ENCODE measurements at regions of chr14 and their contacts with region 1.

Region 1: DNA sequence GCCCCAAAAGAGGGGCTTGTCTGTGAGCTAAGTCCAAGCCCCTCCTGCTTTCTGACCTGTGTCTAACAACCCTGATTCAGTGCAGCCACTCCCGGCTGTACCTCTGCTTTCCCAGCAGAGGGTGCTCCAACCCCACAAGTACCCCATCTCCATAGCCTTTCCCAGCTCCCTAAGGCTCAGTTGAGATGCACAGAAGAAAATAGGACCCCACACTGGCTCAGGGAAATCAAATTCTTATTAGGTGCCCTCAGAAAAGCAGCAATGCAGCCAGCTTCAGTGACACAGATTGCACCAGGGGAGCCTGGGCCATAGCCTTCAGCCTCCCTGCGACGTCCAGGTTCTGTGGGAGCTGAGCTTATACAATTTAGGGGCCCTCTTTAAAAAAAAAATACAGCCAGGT is 49.9 kb downstream of the LRRC74A start:
- DNase-seq: no peak
- ATAC-seq: peak; percentile 92
- H3K4me3 ChIP-seq: no peak overlapping the region
- H3K27ac ChIP-seq: no peak overlapping the region
- H3K4me1 ChIP-seq: no peaks in the 10 kb centered on the region
- H3K27me3 ChIP-seq: no peaks in the 10 kb centered on the region; a peak in 1 of 4 replicates
- CTCF ChIP-seq: peak; percentile 90 to 94 (median 92)
- EP300 ChIP-seq: no peak
- POLR2A ChIP-seq: no peak
- RAD21 ChIP-seq: peak; percentile 97

Region 2: GRCh38 chr14:76827696-76828296 is 48.3 kb before region 1 on chr14:
- CTCF ChIA-PET with region 1: no interaction called
- POLR2A ChIA-PET with region 1: no interaction called
- RAD21 ChIA-PET with region 1: no interaction called
- SMC1A ChIA-PET with region 1: no interaction called
- in situ Hi-C with region 1: no loop called
- intact Hi-C with region 1: no loop called
- DNase-seq: no peak
- ATAC-seq: no peak
- H3K4me3 ChIP-seq: no peak overlapping the region
- H3K27ac ChIP-seq: no peak overlapping the region
- H3K4me1 ChIP-seq: no peaks in the 10 kb centered on the region
- H3K27me3 ChIP-seq: peaks cover 0 to 1% of the 10 kb centered on the region in 2 experiments; a peak in 1 of 4 replicates
- CTCF ChIP-seq: no peak
- EP300 ChIP-seq: no peak
- POLR2A ChIP-seq: no peak
- RAD21 ChIP-seq: no peak

Region 3: GRCh38 chr14:76891391-76891790 is 15.3 kb after region 1 on chr14:
- CTCF ChIA-PET with region 1: interaction called, 13 read pairs
- POLR2A ChIA-PET with region 1: no interaction called
- RAD21 ChIA-PET with region 1: interaction called, 4 read pairs
- SMC1A ChIA-PET with region 1: interaction called, 7 read pairs
- in situ Hi-C with region 1: no loop called
- intact Hi-C with region 1: no loop called
- DNase-seq: no peak
- ATAC-seq: no peak
- H3K4me3 ChIP-seq: no peak overlapping the region
- H3K27ac ChIP-seq: no peak overlapping the region
- H3K4me1 ChIP-seq: no peaks in the 10 kb centered on the region
- H3K27me3 ChIP-seq: no peaks in the 10 kb centered on the region; a peak in 1 of 4 replicates
- CTCF ChIP-seq: no peak
- EP300 ChIP-seq: no peak
- POLR2A ChIP-seq: no peak
- RAD21 ChIP-seq: no peak

Region 4: GRCh38 chr14:76947078-76947837 is 71.2 kb after region 1 on chr14:
- CTCF ChIA-PET with region 1: interaction called, 13 read pairs
- POLR2A ChIA-PET with region 1: no interaction called
- RAD21 ChIA-PET with region 1: interaction called, 10 read pairs
- SMC1A ChIA-PET with region 1: interaction called, 9 read pairs
- in situ Hi-C with region 1: no loop called
- intact Hi-C with region 1: loop called (anchors 5 kb)
- DNase-seq: peak; percentile 67
- ATAC-seq: peak; percentile 87
- H3K4me3 ChIP-seq: no peak overlapping the region
- H3K27ac ChIP-seq: peak overlapping the region; percentile 64
- H3K4me1 ChIP-seq: peaks cover 29% of the 10 kb centered on the region
- H3K27me3 ChIP-seq: no peaks in the 10 kb centered on the region
- CTCF ChIP-seq: peak; percentile 45 to 72 (median 58)
- EP300 ChIP-seq: peak in 1 of 2 experiments; percentile 65; a peak in 2 of 4 replicates
- POLR2A ChIP-seq: no peak
- RAD21 ChIP-seq: peak; percentile 72

Region 5: DNA sequence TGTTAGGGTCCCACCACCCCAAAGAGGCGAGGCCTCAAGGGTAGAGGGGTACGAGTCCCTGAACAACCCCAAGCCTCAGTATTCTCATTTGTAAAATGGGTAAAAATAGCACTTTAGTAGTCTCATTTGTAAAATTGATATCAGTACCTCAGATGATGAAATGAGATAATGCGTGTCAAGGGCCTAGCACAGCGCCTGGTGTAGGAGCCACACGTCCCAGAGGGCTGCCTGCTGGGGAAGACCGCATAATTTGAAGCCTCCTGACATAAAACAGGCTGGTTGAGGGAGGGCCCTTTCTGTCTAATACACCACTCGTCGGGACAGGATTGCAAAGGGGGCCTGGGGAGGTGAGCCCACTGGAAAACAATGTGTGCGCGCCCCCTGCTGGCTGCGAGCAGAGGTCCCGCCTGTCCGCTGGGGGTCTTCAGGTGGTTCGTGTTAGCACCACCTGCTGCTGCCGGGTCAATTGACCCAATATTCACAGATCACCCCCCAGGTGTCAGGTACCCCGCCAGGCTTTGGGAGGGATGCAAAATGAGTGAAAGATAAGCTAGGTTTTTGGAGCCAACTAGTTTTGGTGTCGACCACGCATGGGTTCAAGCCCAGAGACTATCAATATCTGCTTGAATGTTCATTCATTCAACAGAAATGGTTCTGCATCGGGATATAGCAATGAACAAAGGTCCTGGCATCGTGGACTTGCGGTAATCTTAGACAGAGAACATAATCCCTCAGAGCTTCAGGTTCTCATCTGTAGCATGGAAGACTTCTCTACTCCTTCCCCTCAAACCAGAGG is 177.2 kb after region 1 on chr14:
- CTCF ChIA-PET with region 1: interaction called, 63 read pairs
- POLR2A ChIA-PET with region 1: no interaction called
- RAD21 ChIA-PET with region 1: interaction called, 31 read pairs
- SMC1A ChIA-PET with region 1: interaction called, 41 read pairs
- in situ Hi-C with region 1: no loop called
- intact Hi-C with region 1: loop called (anchors 1 kb)
- DNase-seq: no peak
- ATAC-seq: peak; percentile 98
- H3K4me3 ChIP-seq: no peak overlapping the region
- H3K27ac ChIP-seq: no peak overlapping the region
- H3K4me1 ChIP-seq: peaks cover 12% of the 10 kb centered on the region
- H3K27me3 ChIP-seq: no peaks in the 10 kb centered on the region
- CTCF ChIP-seq: peak; percentile 77 to 90 (median 85)
- EP300 ChIP-seq: no peak
- POLR2A ChIP-seq: no peak
- RAD21 ChIP-seq: peak; percentile 91

Region 6: DNA sequence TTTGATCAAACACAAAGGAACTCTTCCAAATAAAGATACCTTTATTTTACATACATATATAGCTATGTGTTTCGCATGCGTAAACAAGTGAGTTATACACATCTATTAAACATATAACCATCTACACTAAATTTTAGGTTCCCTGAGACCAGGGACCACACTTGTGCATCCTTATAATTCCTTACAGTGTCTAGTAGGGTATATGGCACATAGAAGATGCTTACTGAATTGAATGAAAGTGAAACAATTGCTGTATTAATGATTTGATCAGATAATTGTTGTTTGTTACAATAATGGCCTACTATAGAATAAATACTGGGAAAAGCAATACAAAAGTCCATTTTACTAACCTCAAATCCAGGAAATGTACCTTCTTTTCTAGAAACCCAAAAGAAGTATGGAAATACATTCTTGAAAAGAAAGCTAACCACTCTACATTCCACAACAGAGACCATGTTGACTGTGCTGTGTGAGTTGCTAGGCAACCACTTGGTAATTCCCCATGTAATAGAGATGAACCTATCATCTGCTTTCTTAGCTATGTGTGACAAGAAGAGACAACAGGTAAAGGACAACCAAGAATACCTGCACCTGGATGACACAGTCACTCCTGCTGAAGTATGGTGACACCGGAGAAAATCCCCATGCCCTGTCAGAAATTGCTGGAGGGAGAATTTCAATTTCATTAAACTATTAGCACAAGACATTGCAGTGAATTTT is 210.1 kb after region 1 on chr14:
- CTCF ChIA-PET with region 1: interaction called, 205 read pairs
- POLR2A ChIA-PET with region 1: no interaction called
- RAD21 ChIA-PET with region 1: interaction called, 11 read pairs
- SMC1A ChIA-PET with region 1: interaction called, 23 read pairs
- in situ Hi-C with region 1: no loop called
- intact Hi-C with region 1: no loop called
- DNase-seq: no peak
- ATAC-seq: peak; percentile 82
- H3K4me3 ChIP-seq: no peak overlapping the region
- H3K27ac ChIP-seq: no peak overlapping the region
- H3K4me1 ChIP-seq: peaks cover 21% of the 10 kb centered on the region
- H3K27me3 ChIP-seq: no peaks in the 10 kb centered on the region; a peak in 1 of 4 replicates
- CTCF ChIP-seq: no peak
- EP300 ChIP-seq: no peak
- POLR2A ChIP-seq: no peak
- RAD21 ChIP-seq: no peak

Region 7: DNA sequence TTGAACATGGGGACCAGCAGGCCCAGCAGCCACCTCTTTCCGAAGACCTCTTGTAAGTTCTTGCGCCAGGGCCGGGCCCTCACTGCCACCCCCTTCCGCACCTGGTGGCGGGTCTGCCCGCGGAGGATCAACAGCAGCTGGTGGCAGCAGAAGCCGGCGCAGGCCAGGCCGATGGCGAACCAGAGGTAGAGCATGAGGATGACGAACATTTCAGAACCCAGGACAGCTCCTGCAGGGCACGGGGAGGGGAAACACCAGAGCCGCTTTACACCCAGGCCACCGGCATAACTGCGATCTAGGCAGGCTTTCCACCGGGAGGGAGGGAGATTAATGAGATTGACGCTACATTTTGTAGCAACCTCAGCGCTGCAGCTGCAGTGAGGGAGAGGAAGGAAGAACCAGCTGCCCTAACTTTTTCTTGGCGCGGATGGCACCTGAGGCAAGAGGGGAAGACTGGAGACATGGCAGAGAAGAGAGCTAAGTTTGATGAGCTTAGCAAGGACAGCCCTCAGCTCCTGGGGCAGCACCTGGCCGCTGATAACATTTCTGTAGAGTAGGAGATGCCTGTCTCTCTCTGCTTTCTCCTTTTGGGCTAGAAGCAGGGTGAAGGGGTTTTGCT is 257.8 kb after region 1 on chr14:
- CTCF ChIA-PET with region 1: interaction called, 11 read pairs
- POLR2A ChIA-PET with region 1: no interaction called
- RAD21 ChIA-PET with region 1: interaction called, 6 read pairs
- SMC1A ChIA-PET with region 1: interaction called, 3 read pairs
- in situ Hi-C with region 1: no loop called
- intact Hi-C with region 1: no loop called
- DNase-seq: no peak
- ATAC-seq: peak; percentile 92
- H3K4me3 ChIP-seq: no peak overlapping the region
- H3K27ac ChIP-seq: no peak overlapping the region
- H3K4me1 ChIP-seq: no peaks in the 10 kb centered on the region
- H3K27me3 ChIP-seq: peaks cover 11 to 13% of the 10 kb centered on the region in 2 experiments
- CTCF ChIP-seq: no peak
- EP300 ChIP-seq: no peak
- POLR2A ChIP-seq: no peak
- RAD21 ChIP-seq: no peak

Region 8: GRCh38 chr14:77704740-77705139 is 828.7 kb after region 1 on chr14:
- CTCF ChIA-PET with region 1: no interaction called
- POLR2A ChIA-PET with region 1: no interaction called
- RAD21 ChIA-PET with region 1: no interaction called
- SMC1A ChIA-PET with region 1: no interaction called
- in situ Hi-C with region 1: no loop called
- intact Hi-C with region 1: no loop called
- DNase-seq: no peak
- ATAC-seq: no peak
- H3K4me3 ChIP-seq: no peak overlapping the region
- H3K27ac ChIP-seq: no peak overlapping the region
- H3K4me1 ChIP-seq: peaks cover 7% of the 10 kb centered on the region
- H3K27me3 ChIP-seq: no peaks in the 10 kb centered on the region
- CTCF ChIP-seq: no peak
- EP300 ChIP-seq: no peak
- POLR2A ChIP-seq: no peak
- RAD21 ChIP-seq: no peak

Region 9: DNA sequence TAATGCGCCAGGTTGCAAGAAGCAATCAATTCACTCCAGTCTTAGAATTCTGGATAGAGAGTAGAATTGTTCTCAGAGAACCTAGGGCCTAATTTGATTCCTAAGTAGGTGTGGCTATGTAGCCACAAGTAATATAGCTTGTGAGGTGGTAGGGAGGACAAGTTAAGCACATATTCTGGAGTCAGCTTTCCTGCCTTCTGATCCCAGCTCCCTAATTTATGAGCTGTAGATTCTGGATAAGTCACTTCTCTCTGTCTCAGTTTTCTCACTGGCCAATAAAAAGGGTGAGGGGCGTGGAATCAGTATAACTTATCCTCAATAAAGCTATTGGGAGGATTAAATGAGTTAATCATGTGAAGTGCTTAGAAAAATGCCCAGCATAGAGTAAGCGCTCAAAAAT is 887.9 kb after region 1 on chr14:
- CTCF ChIA-PET with region 1: no interaction called
- POLR2A ChIA-PET with region 1: no interaction called
- RAD21 ChIA-PET with region 1: no interaction called
- SMC1A ChIA-PET with region 1: no interaction called
- in situ Hi-C with region 1: no loop called
- intact Hi-C with region 1: no loop called
- DNase-seq: no peak
- ATAC-seq: no peak
- H3K4me3 ChIP-seq: no peak overlapping the region
- H3K27ac ChIP-seq: no peak overlapping the region
- H3K4me1 ChIP-seq: peaks cover 2% of the 10 kb centered on the region
- H3K27me3 ChIP-seq: no peaks in the 10 kb centered on the region
- CTCF ChIP-seq: no peak
- EP300 ChIP-seq: no peak
- POLR2A ChIP-seq: no peak
- RAD21 ChIP-seq: no peak

Measured in GM12878 (cell line).